PC-9 (cell line): ENCODE measurements at regions of chr1 and their contacts with region 1.

Region 1: GRCh38 chr1:18972531-18972930 is 16.1 kb upstream of the IFFO2 start:
- DNase-seq: peak in 1 of 2 experiments; percentile 56
- H3K4me3 ChIP-seq: no peak overlapping the region
- H3K27ac ChIP-seq: no peak overlapping the region
- H3K4me1 ChIP-seq: peaks cover 10% of the 10 kb centered on the region; the same call in 1 of the 2 replicates
- H3K27me3 ChIP-seq: no peaks in the 10 kb centered on the region
- CTCF ChIP-seq: peak; percentile 31; the same call in 1 of the 2 replicates

Region 2: GRCh38 chr1:19021845-19022244 is 49.3 kb after region 1 on chr1:
- CTCF ChIA-PET with region 1: no interaction called
- POLR2A ChIA-PET with region 1: interaction called, 10 read pairs
- intact Hi-C with region 1: no loop called
- DNase-seq: no peak
- H3K4me3 ChIP-seq: no peak overlapping the region
- H3K27ac ChIP-seq: no peak overlapping the region
- H3K4me1 ChIP-seq: no peaks in the 10 kb centered on the region
- H3K27me3 ChIP-seq: no peaks in the 10 kb centered on the region
- CTCF ChIP-seq: no peak

Region 3: DNA sequence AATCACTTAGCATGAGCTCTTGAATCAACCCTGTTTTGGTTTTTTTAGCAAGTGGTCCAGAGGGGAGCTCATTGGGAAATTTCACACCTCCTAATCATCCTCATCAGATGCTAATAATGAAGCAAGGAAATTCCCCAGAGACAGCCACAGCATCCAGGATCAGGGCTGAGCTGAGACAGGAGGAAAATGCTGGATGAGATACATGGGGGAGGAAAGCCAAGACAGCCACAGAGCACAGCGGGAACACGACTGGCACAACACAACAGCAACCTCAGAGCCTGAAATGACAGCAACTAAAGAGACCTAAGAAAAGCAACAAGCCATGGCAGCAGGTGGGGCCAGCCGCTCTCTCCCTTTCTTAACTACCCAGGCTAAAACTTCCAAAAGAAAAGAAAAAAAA is 167.2 kb after region 1 on chr1:
- CTCF ChIA-PET with region 1: no interaction called
- POLR2A ChIA-PET with region 1: no interaction called
- intact Hi-C with region 1: no loop called
- DNase-seq: no peak
- H3K4me3 ChIP-seq: no peak overlapping the region
- H3K27ac ChIP-seq: no peak overlapping the region
- H3K4me1 ChIP-seq: no peaks in the 10 kb centered on the region
- H3K27me3 ChIP-seq: no peaks in the 10 kb centered on the region
- CTCF ChIP-seq: no peak